IMR-90 (cell line): ENCODE measurements at regions of chr20 and their contacts with region 1.

Region 1: DNA sequence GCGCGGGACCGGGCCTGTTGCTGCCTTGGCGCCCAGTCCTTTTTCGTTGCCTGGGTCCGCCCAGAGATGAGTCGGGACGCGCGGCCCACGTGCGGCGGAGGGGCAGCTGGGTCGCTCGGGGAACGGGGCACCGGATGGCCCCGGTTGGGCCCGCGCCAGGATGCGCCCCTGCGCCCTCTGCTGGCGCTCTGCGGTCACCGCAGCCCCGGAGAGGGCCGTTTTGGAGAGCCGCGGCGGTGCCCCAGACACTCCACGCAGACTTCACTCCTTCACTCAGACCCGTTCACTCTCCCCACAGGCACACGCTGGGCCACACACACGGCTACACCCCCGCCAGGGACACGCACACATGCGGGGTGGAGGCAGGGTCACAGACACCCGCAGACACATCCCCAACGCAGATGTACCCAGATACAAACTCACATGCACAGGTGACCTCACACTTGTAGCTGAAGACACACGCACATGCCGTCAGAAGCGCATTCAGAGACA is 38.8 kb downstream of the SRC start:
- DNase-seq: peak; percentile 38
- ATAC-seq: peak; percentile 93
- H3K4me3 ChIP-seq: no peak overlapping the region
- H3K27ac ChIP-seq: no peak overlapping the region
- H3K4me1 ChIP-seq: peaks cover 9% of the 10 kb centered on the region
- H3K27me3 ChIP-seq: no peaks in the 10 kb centered on the region
- CTCF ChIP-seq: peak; percentile 90
- POLR2A ChIP-seq: no peak
- RAD21 ChIP-seq: peak; percentile 71

Region 2: DNA sequence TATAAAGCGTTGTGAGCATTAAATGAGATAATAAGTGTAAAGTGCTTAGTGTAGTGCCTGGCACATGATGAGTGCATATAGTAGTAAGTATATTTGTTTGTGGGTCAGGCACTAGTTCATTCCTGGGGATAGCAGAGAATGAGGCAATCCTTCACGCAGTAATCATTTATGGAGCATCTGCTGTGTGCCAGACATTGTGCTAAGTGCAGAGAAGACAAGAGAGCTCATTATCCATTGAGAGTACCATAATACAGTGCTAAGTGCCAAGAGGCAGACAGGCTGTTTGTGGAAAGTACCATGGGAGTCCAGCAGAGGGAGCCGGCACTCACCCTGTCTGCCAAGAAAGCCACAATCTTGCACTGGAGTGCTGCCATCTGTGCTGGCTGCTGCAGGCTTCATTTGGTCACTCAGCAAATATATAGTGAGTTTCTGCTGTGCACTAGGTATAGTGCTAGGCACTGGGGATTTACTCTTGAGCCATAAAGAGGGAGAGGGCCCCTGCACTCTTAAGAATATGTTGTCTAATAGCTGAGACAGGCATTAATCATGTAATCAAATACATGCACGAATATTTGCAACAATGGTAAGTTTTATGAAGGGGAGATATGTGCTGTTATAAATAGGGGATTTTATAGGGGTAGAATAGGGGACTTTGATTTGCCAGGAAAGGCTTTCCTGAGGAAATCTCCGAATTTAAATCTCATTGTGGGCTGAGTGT is 192.4 kb before region 1 on chr20:
- CTCF ChIA-PET with region 1: no interaction called
- POLR2A ChIA-PET with region 1: no interaction called
- dilution Hi-C with region 1: no loop called
- in situ Hi-C with region 1: no loop called
- intact Hi-C with region 1: loop called (anchors 5 kb)
- DNase-seq: peak; percentile 89
- ATAC-seq: peak; percentile 88
- H3K4me3 ChIP-seq: no peak overlapping the region
- H3K27ac ChIP-seq: no peak overlapping the region
- H3K4me1 ChIP-seq: no peaks in the 10 kb centered on the region
- H3K27me3 ChIP-seq: no peaks in the 10 kb centered on the region
- CTCF ChIP-seq: peak; percentile 87
- POLR2A ChIP-seq: no peak
- RAD21 ChIP-seq: peak; percentile 56

Region 3: GRCh38 chr20:37202267-37202943 is 182.3 kb before region 1 on chr20:
- CTCF ChIA-PET with region 1: no interaction called
- POLR2A ChIA-PET with region 1: no interaction called
- dilution Hi-C with region 1: no loop called
- in situ Hi-C with region 1: loop called (anchors 10 kb)
- intact Hi-C with region 1: loop called (anchors 5 kb)
- DNase-seq: peak; percentile 98
- ATAC-seq: peak; percentile 96
- H3K4me3 ChIP-seq: no peak overlapping the region; the same call in 1 of the 2 replicates
- H3K27ac ChIP-seq: peak overlapping the region; percentile 5; the same call in 1 of the 2 replicates
- H3K4me1 ChIP-seq: peaks cover 3% of the 10 kb centered on the region
- H3K27me3 ChIP-seq: no peaks in the 10 kb centered on the region
- CTCF ChIP-seq: peak; percentile 97
- POLR2A ChIP-seq: no peak
- RAD21 ChIP-seq: peak; percentile 47

Region 4: DNA sequence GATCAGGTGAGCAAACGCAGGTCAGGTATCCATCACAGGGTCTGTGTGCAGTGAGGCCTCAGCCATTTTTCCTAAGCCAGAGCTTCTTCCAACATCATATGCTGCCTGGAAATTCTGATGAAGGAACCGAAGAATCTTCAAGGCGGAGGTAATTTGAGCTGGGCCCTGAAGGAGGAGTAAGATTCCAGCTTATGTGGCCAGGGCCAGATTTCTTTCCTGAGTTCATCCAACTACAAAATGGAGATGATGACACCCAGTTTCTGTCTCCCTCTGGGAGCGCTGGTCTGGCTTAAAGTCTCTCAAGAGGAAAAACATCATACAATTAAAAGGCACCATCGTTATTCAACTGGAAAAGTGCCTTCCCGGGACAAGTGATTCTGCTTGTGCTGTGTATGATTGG is 102.2 kb before region 1 on chr20:
- CTCF ChIA-PET with region 1: interaction called, 8 read pairs
- POLR2A ChIA-PET with region 1: no interaction called
- dilution Hi-C with region 1: no loop called
- in situ Hi-C with region 1: loop called (anchors 5 kb)
- intact Hi-C with region 1: loop called (anchors 1 kb)
- DNase-seq: peak; percentile 81
- ATAC-seq: peak; percentile 95
- H3K4me3 ChIP-seq: no peak overlapping the region
- H3K27ac ChIP-seq: no peak overlapping the region
- H3K4me1 ChIP-seq: peaks cover 2% of the 10 kb centered on the region; the same call in 1 of the 2 replicates
- H3K27me3 ChIP-seq: no peaks in the 10 kb centered on the region; the same call in 1 of the 2 replicates
- CTCF ChIP-seq: peak; percentile 86
- POLR2A ChIP-seq: no peak
- RAD21 ChIP-seq: peak; percentile 94

Region 5: GRCh38 chr20:37527638-37528441 is 143.1 kb after region 1 on chr20 and contains the start of gene BLCAP:
- CTCF ChIA-PET with region 1: interaction called, 3 read pairs
- POLR2A ChIA-PET with region 1: no interaction called
- dilution Hi-C with region 1: no loop called
- in situ Hi-C with region 1: no loop called
- intact Hi-C with region 1: loop called (anchors 2 kb)
- DNase-seq: peak; percentile 78
- ATAC-seq: peak; percentile 91
- H3K4me3 ChIP-seq: peak within 1 kb of the TSS; percentile 80
- H3K27ac ChIP-seq: peak within 1 kb of the TSS; percentile 87
- H3K4me1 ChIP-seq: peaks cover 11% of the 10 kb centered on the region
- H3K27me3 ChIP-seq: no peaks in the 10 kb centered on the region
- CTCF ChIP-seq: no peak
- POLR2A ChIP-seq: peak; percentile 72
- RAD21 ChIP-seq: no peak
- total RNA-seq, gene BLCAP: 17.7 and 23.3 TPM in 2 replicates

Region 6: GRCh38 chr20:37534401-37535157 is 149.8 kb after region 1 on chr20:
- CTCF ChIA-PET with region 1: interaction called, 3 read pairs
- POLR2A ChIA-PET with region 1: no interaction called
- dilution Hi-C with region 1: no loop called
- in situ Hi-C with region 1: no loop called
- intact Hi-C with region 1: loop called (anchors 2 kb)
- DNase-seq: peak; percentile 77
- ATAC-seq: peak; percentile 98
- H3K4me3 ChIP-seq: no peak overlapping the region
- H3K27ac ChIP-seq: no peak overlapping the region
- H3K4me1 ChIP-seq: no peaks in the 10 kb centered on the region
- H3K27me3 ChIP-seq: peaks cover 14% of the 10 kb centered on the region
- CTCF ChIP-seq: peak; percentile 93
- POLR2A ChIP-seq: peak; percentile 49; the same call in 1 of the 2 replicates
- RAD21 ChIP-seq: peak; percentile 99